Common myeloid progenitor, CD34-positive (primary cell): ENCODE measurements at regions of chr10 and their contacts with region 1.

Region 1: DNA sequence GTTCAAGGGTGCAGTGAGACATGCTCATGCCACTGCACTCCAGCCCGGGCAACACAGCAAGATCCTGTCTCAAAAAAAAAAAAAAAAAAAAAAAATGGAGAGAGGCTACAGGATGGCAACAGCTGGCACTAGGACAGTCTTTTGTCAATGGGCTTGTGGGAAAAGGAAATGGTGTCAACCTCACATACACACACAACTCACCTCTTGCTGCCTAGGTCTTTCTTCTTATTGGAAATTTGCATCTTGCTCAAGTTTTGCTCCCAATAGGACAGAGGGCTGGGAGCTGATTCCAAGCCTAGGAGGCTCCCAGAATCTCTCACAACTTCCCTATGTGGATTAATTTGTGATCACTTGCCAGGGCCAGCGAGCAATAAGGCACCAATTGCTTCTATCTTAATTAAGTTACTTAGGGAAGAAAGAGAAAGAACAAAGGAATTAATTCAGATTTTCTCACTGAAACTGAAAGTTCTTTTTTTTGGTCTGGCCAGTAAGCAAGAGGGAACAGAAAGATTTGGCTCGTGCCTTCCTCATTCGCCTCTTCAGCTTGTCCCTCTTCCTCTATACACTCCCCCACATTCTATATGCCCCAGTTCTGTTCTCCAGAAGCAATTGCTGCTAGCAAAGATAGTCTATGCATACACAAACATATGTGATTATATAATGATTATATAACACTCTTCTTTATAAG is 33.8 kb downstream of the MAP3K8 start:
- DNase-seq: peak in 2 of 3 donors; percentile 65 to 67
- H3K4me3 ChIP-seq: peak overlapping the region in 1 of 7 experiments; percentile 30
- H3K27ac ChIP-seq: no peak overlapping the region
- H3K4me1 ChIP-seq: peaks cover 6 to 24% (median 8%) of the 10 kb centered on the region in 4 experiments
- H3K27me3 ChIP-seq: no peaks in the 10 kb centered on the region

Region 2: GRCh38 chr10:30420266-30420665 is 47.5 kb before region 1 on chr10:
- CTCF ChIA-PET with region 1: no interaction called
- POLR2A ChIA-PET with region 1: no interaction called
- DNase-seq: no peak
- H3K4me3 ChIP-seq: no peak overlapping the region
- H3K27ac ChIP-seq: no peak overlapping the region
- H3K4me1 ChIP-seq: peaks cover 20 to 56% (median 34%) of the 10 kb centered on the region in 4 experiments
- H3K27me3 ChIP-seq: no peaks in the 10 kb centered on the region

Region 3: DNA sequence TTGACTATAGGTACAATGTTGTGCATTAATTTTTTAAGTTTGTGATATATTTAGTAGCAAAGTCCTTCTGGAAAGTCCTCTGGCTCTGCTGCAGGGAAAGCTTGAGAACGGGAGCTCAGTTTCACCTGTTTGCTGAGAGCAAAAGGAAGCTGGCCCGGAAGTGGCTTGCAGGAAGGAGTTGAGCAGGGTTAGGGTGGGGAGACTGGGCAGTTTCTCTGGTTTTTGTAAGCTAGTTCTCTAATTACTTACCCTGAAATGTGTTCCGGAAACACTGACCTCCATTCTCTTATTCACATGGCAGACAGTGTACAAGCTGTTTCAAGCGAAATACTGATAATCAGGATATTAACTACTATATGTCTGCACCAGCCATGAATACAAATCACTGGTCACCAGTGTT is 11.5 kb before region 1 on chr10:
- CTCF ChIA-PET with region 1: interaction called, 21 read pairs
- POLR2A ChIA-PET with region 1: no interaction called
- DNase-seq: peak; percentile 53 to 96 (median 93)
- H3K4me3 ChIP-seq: peak overlapping the region in 4 of 7 experiments; percentile 4 to 52 (median 35)
- H3K27ac ChIP-seq: peak overlapping the region in 1 of 2 experiments; percentile 56
- H3K4me1 ChIP-seq: peaks cover 22 to 61% (median 36%) of the 10 kb centered on the region in 4 experiments
- H3K27me3 ChIP-seq: no peaks in the 10 kb centered on the region